ENCODE measurements at regions of chr17 and their contacts with region 1.

Region 1: GRCh38 chr17:41406205-41406604 is 8.8 kb upstream of the KRT31 start:
- DNase-seq: no peak
- H3K4me3 ChIP-seq: no peak overlapping the region
- H3K27ac ChIP-seq: no peak overlapping the region
- H3K4me1 ChIP-seq: no peaks in the 10 kb centered on the region
- H3K27me3 ChIP-seq: no peaks in the 10 kb centered on the region
- CTCF ChIP-seq: no peak

Region 2: DNA sequence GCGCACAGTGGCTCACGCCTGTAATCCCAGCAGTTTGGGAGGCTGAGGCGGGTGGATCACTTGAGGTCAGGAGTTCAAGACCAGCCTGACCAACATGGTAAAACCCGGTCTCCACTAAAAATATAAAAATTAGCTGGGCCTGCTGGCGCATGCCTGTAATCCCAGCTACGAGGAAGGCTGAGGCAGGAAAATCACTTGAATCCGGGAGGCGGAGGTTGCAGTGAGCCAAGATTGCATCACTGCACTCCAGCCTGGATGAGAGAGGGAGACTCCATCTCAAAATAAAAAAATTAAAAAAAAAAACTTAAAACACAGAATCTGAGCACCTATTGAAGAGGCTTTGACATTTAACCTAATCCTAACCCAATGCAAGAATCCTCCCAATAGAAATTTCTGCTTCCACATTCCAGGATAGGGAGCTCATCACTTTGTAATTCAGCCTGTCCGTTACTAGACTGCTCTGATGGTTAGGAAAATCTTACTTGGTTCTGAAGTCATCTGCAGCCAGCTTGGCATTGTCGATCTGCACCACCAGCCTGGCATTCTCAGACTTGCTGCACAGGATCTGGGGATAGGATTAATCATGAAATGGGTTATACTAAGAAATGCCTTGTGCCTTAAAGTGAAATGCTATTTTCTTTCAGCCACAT is 38.7 kb before region 1 on chr17:
- CTCF ChIA-PET with region 1: interaction called, 10 read pairs
- POLR2A ChIA-PET with region 1: no interaction called
- intact Hi-C with region 1: no loop called
- DNase-seq: no peak
- H3K4me3 ChIP-seq: no peak overlapping the region
- H3K27ac ChIP-seq: no peak overlapping the region
- H3K4me1 ChIP-seq: no peaks in the 10 kb centered on the region
- H3K27me3 ChIP-seq: no peaks in the 10 kb centered on the region
- CTCF ChIP-seq: no peak